ENCODE measurements at regions of chrX and their contacts with region 1.

Region 1: DNA sequence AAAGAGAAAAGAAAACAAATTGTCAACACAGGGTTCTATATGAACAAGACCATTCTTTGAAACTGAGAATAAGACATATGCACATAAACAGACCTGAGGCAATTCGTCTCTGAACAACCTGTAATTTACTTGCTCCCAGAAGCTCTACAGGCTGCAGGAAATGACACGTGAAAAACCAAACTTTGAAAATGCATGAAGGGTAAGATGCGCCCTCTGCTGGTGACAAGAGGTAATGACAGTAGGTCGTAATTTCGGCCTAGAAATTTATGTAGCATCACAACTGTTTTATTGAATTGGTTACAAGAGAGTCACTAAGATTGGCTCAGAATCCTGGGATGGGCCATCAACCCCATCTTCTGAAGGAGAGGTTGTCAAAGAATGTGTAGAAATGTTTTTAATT is 276.5 kb downstream of the PPP4R3C start:
- DNase-seq: peak; percentile 34
- H3K4me3 ChIP-seq: no peak overlapping the region
- H3K27ac ChIP-seq: no peak overlapping the region
- H3K4me1 ChIP-seq: no peaks in the 10 kb centered on the region
- H3K27me3 ChIP-seq: no peaks in the 10 kb centered on the region
- CTCF ChIP-seq: peak; percentile 81

Region 2: GRCh38 chrX:26851981-26852380 is 334.7 kb before region 1 on chrX:
- CTCF ChIA-PET with region 1: interaction called, 3 read pairs
- dilution Hi-C with region 1: no loop called
- in situ Hi-C with region 1: loop called (anchors 10 kb)
- intact Hi-C with region 1: loop called (anchors 1 kb)
- DNase-seq: peak; percentile 10
- H3K4me3 ChIP-seq: no peak overlapping the region
- H3K27ac ChIP-seq: no peak overlapping the region
- H3K4me1 ChIP-seq: no peaks in the 10 kb centered on the region
- H3K27me3 ChIP-seq: peaks cover 2% of the 10 kb centered on the region
- CTCF ChIP-seq: peak; percentile 16 to 61

Region 3: DNA sequence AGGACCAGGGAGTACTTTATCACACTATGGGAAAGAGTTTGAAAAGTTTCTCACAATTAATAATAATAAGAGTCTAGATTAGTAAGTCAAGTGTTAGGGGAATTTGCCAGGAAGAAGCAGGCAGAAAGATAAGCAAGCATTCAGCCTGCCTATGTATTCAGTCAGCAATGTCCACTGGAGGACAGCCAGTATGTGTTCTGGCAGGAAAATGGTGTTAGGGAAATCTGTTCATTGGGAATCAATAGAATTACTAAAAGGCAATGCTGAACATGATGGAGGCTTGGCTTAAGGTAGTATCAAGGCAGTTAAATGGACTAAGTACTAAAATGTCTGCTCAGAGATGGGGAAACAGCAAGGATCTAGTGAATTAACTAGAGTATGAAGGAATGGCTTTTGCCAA is 55.3 kb after region 1 on chrX:
- CTCF ChIA-PET with region 1: no interaction called
- dilution Hi-C with region 1: no loop called
- in situ Hi-C with region 1: no loop called
- intact Hi-C with region 1: no loop called
- DNase-seq: no peak
- H3K4me3 ChIP-seq: no peak overlapping the region
- H3K27ac ChIP-seq: no peak overlapping the region
- H3K4me1 ChIP-seq: no peaks in the 10 kb centered on the region
- H3K27me3 ChIP-seq: no peaks in the 10 kb centered on the region
- CTCF ChIP-seq: no peak